Caco-2 (cell line): ENCODE measurements at regions of chr2 and their contacts with region 1.

Region 1: GRCh38 chr2:42386684-42387083 is 25.7 kb upstream of the COX7A2L start:
- DNase-seq: no peak
- H3K4me3 ChIP-seq: no peak overlapping the region
- H3K4me3 Mint-ChIP-seq: no peak overlapping the region
- H3K27ac Mint-ChIP-seq: no peak overlapping the region
- H3K4me1 ChIP-seq: no peaks in the 10 kb centered on the region
- H3K4me1 Mint-ChIP-seq: no peaks in the 10 kb centered on the region
- H3K27me3 ChIP-seq: 0 out of 2 replicates have a peak, but pooled peaks cover 1% of the 10 kb centered on the region
- H3K27me3 Mint-ChIP-seq: no peaks in the 10 kb centered on the region
- CTCF ChIP-seq: peak; percentile 40 to 43

Region 2: DNA sequence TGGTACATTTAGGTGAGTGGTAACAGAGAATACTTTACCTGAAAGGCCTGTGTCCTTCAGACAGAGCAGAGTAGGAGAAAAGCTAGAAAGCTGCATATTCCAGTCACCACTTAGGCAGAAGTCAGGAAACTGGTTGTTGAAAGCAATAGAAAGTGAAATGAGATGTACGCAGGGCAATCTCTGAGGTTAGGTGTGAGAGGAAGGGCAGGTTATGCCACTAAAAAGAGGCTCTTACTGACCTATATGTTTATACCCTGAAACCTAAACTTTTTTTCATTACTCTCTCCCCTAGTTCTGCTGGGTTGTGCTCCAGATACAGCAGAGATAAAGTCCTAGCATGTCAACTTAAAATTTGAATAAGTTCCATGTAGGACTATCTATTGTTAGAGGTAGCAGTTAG is 119.2 kb before region 1 on chr2:
- CTCF ChIA-PET with region 1: no interaction called
- POLR2A ChIA-PET with region 1: no interaction called
- intact Hi-C with region 1: no loop called
- DNase-seq: no peak
- H3K4me3 ChIP-seq: no peak overlapping the region
- H3K4me3 Mint-ChIP-seq: no peak overlapping the region
- H3K27ac Mint-ChIP-seq: no peak overlapping the region
- H3K4me1 ChIP-seq: no peaks in the 10 kb centered on the region
- H3K4me1 Mint-ChIP-seq: no peaks in the 10 kb centered on the region
- H3K27me3 ChIP-seq: no peaks in the 10 kb centered on the region
- H3K27me3 Mint-ChIP-seq: no peaks in the 10 kb centered on the region
- CTCF ChIP-seq: no peak

Region 3: GRCh38 chr2:42360890-42361727 is 25.6 kb before region 1 on chr2 and contains the start of gene COX7A2L:
- CTCF ChIA-PET with region 1: no interaction called
- POLR2A ChIA-PET with region 1: no interaction called
- intact Hi-C with region 1: no loop called
- DNase-seq: peak; percentile 98
- H3K4me3 ChIP-seq: peak within 1 kb of the TSS; percentile 91
- H3K4me3 Mint-ChIP-seq: peak within 1 kb of the TSS; percentile 89
- H3K27ac Mint-ChIP-seq: peak within 1 kb of the TSS; percentile 97
- H3K4me1 ChIP-seq: peaks cover 8% of the 10 kb centered on the region; the same call in 1 of the 2 replicates
- H3K4me1 Mint-ChIP-seq: peaks cover 15% of the 10 kb centered on the region
- H3K27me3 ChIP-seq: no peaks in the 10 kb centered on the region
- H3K27me3 Mint-ChIP-seq: no peaks in the 10 kb centered on the region
- CTCF ChIP-seq: peak in 1 of 2 experiments; percentile 39
- total RNA-seq, gene COX7A2L: 117 and 125 TPM in 2 replicates

Region 4: GRCh38 chr2:42464631-42465030 is 77.9 kb after region 1 on chr2:
- CTCF ChIA-PET with region 1: no interaction called
- POLR2A ChIA-PET with region 1: no interaction called
- intact Hi-C with region 1: loop called (anchors 5 kb)
- DNase-seq: no peak
- H3K4me3 ChIP-seq: no peak overlapping the region
- H3K4me3 Mint-ChIP-seq: no peak overlapping the region
- H3K27ac Mint-ChIP-seq: no peak overlapping the region
- H3K4me1 ChIP-seq: no peaks in the 10 kb centered on the region
- H3K4me1 Mint-ChIP-seq: no peaks in the 10 kb centered on the region
- H3K27me3 ChIP-seq: no peaks in the 10 kb centered on the region
- H3K27me3 Mint-ChIP-seq: no peaks in the 10 kb centered on the region
- CTCF ChIP-seq: no peak

Region 5: DNA sequence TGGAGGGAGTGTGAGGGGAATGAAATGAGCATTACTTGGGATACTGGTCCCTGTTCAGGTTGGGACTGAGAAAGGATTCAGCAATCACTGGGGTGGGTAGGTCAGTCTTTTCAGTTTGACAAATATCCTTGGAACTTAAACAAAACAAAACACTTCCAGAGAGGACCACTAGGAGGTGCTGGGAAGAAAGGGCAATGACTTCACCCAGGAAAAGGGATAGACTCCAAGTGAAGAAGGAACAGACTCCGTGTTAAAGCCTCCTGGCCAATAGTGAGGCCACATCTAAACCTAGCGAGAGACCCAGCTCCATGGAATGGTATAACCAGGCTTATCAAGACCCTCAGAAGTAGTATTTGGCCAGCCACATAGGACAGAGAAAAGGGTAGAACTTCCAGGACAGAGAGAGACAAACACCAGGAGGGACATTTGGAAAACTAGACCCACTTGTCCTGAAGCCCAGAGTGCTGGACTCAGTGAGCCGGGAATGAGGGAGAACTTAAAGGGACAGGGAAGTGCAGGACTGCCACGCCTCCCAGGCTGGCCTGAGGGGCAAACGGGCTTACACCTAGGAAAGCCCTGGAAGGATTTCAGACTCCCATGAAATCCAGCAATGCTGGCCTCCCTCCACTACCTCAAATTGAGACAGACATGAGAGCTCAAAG is 126.7 kb after region 1 on chr2:
- CTCF ChIA-PET with region 1: no interaction called
- POLR2A ChIA-PET with region 1: no interaction called
- intact Hi-C with region 1: no loop called
- DNase-seq: peak; percentile 42 to 71
- H3K4me3 ChIP-seq: no peak overlapping the region
- H3K4me3 Mint-ChIP-seq: no peak overlapping the region
- H3K27ac Mint-ChIP-seq: no peak overlapping the region
- H3K4me1 ChIP-seq: no peaks in the 10 kb centered on the region
- H3K4me1 Mint-ChIP-seq: peaks cover 6% of the 10 kb centered on the region
- H3K27me3 ChIP-seq: no peaks in the 10 kb centered on the region
- H3K27me3 Mint-ChIP-seq: no peaks in the 10 kb centered on the region
- CTCF ChIP-seq: peak; percentile 65 to 67

Region 6: DNA sequence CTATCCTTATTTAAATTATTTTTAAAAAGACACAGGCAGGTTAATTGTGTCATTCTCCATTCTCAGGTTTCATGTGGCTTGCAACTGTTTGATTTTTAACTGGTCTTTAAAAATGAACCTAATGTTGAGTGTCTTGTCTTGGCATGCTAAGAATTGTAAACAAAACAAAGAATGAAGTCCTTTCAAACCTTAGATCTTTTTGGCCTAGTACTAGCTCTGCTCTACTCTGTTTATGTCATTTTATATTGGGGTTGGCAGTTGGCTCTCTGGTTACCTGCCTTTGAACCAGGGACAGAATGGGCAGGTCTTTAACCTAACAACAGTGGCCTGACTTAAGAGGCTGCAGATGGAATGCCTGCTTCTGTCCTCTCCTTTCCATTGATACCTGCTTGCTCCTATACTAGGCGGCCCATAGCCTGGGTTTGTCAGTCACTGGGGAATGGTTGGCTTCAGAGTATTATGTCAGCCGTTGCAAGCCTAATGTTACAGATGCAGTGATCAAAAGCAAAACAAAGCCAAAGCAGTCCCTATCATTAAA is 267.3 kb after region 1 on chr2:
- CTCF ChIA-PET with region 1: interaction called, 10 read pairs
- POLR2A ChIA-PET with region 1: no interaction called
- intact Hi-C with region 1: no loop called
- DNase-seq: no peak
- H3K4me3 ChIP-seq: no peak overlapping the region
- H3K4me3 Mint-ChIP-seq: no peak overlapping the region
- H3K27ac Mint-ChIP-seq: no peak overlapping the region
- H3K4me1 ChIP-seq: no peaks in the 10 kb centered on the region
- H3K4me1 Mint-ChIP-seq: peaks cover 13% of the 10 kb centered on the region
- H3K27me3 ChIP-seq: no peaks in the 10 kb centered on the region
- H3K27me3 Mint-ChIP-seq: no peaks in the 10 kb centered on the region
- CTCF ChIP-seq: no peak